GM12878 (cell line): ENCODE measurements at regions of chr1 and their contacts with region 1.

Region 1: GRCh38 chr1:201511941-201512539 is 5.1 kb upstream of the CSRP1 start:
- DNase-seq: peak; percentile 35
- ATAC-seq: peak; percentile 73
- H3K4me3 ChIP-seq: peak overlapping the region; percentile 43; the same call in 1 of the 2 replicates
- H3K27ac ChIP-seq: no peak overlapping the region; the same call in none of the 2 replicates
- H3K4me1 ChIP-seq: peaks cover 42% of the 10 kb centered on the region
- H3K27me3 ChIP-seq: no peaks in the 10 kb centered on the region
- CTCF ChIP-seq: peak in 1 of 3 experiments; percentile 3; a peak in 1 of 6 replicates
- EP300 ChIP-seq: no peak
- POLR2A ChIP-seq: no peak
- RAD21 ChIP-seq: no peak

Region 2: DNA sequence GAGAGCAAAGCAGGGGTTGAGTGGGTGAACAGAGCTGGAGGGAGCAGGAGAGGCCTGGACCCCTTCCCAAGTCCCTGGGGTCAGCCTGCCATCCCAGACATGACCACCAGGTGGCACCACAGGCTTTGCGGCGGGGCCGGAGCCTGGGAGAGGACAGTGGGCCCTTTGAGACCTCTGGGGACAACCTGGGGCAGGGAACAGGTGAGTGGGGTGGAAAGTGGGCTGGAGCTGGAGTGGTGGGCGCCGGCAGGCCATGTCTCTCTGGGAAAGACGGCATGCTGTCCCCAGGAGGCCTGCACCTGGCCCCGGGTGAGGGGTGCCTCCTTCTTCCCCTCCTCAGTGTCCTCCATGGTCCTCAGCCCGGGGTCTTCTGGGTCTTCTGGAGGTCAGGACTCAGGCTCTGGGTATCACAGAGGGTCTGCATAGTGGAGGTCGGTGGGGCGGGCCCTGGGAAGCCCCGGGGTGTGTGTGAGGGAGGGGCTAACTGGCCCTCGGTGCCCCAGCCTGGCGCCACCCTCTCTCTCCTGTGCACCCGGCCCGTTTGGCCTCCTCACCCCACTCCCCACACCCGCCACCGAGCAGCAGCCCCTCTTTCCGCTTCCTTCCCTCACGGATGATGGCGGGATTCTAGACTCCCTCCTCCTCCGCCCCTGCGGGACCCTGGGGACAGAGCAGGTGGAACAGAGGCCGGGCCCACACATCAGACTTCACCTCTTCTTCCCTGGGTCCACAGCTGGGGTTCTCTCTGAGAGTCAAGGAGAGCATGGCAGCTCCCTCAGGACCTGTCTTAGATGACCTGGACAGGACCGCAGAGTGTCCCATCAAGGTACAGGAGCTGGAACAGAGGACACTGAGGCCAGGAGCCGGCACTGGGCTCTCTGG is 257.2 kb before region 1 on chr1:
- CTCF ChIA-PET with region 1: interaction called, 6 read pairs
- POLR2A ChIA-PET with region 1: no interaction called
- RAD21 ChIA-PET with region 1: no interaction called
- SMC1A ChIA-PET with region 1: no interaction called
- in situ Hi-C with region 1: no loop called
- intact Hi-C with region 1: loop called (anchors 10 kb)
- DNase-seq: no peak
- ATAC-seq: peak; percentile 95
- H3K4me3 ChIP-seq: no peak overlapping the region
- H3K27ac ChIP-seq: no peak overlapping the region
- H3K4me1 ChIP-seq: no peaks in the 10 kb centered on the region
- H3K27me3 ChIP-seq: no peaks in the 10 kb centered on the region
- CTCF ChIP-seq: peak; percentile 94 to 99 (median 96)
- EP300 ChIP-seq: no peak
- POLR2A ChIP-seq: no peak
- RAD21 ChIP-seq: peak; percentile 89

Region 3: GRCh38 chr1:201385299-201385891 is 126.6 kb before region 1 on chr1:
- CTCF ChIA-PET with region 1: interaction called, 37 read pairs
- POLR2A ChIA-PET with region 1: no interaction called
- RAD21 ChIA-PET with region 1: interaction called, 10 read pairs
- SMC1A ChIA-PET with region 1: interaction called, 12 read pairs
- in situ Hi-C with region 1: no loop called
- intact Hi-C with region 1: no loop called
- DNase-seq: no peak
- ATAC-seq: peak; percentile 99
- H3K4me3 ChIP-seq: no peak overlapping the region
- H3K27ac ChIP-seq: no peak overlapping the region
- H3K4me1 ChIP-seq: no peaks in the 10 kb centered on the region
- H3K27me3 ChIP-seq: no peaks in the 10 kb centered on the region; a peak in 1 of 4 replicates
- CTCF ChIP-seq: peak; percentile 93 to 97 (median 96); a peak in 5 of 6 replicates
- EP300 ChIP-seq: no peak
- POLR2A ChIP-seq: no peak
- RAD21 ChIP-seq: peak; percentile 78

Region 4: DNA sequence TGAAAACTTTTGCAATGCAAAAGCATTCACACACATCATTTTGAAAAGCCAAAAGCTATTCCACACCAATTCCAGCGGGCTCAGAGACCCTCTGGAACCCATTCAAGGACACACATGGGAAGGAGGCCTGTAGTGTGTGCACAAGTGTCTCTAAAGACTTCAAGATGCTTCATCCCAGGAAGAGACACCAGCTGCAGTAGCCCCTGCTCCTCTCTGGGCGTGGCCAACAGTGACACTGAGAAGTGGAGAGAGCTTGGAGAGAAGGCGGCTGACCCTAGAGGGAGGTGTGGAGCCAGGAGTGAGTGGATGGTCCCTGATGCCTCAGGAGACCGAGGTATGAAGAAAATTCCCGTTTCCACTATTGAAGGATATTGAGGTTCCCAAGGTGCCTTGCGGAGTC is 75.6 kb before region 1 on chr1:
- CTCF ChIA-PET with region 1: interaction called, 88 read pairs
- POLR2A ChIA-PET with region 1: interaction called, 5 read pairs
- RAD21 ChIA-PET with region 1: interaction called, 35 read pairs
- SMC1A ChIA-PET with region 1: interaction called, 42 read pairs
- in situ Hi-C with region 1: no loop called
- intact Hi-C with region 1: no loop called
- DNase-seq: no peak
- ATAC-seq: peak; percentile 42; the same call in 2 of the 3 replicates
- H3K4me3 ChIP-seq: no peak overlapping the region
- H3K27ac ChIP-seq: no peak overlapping the region
- H3K4me1 ChIP-seq: peaks cover 3% of the 10 kb centered on the region; the same call in 1 of the 2 replicates
- H3K27me3 ChIP-seq: no peaks in the 10 kb centered on the region
- CTCF ChIP-seq: no peak; a peak in 1 of 6 replicates
- EP300 ChIP-seq: no peak
- POLR2A ChIP-seq: no peak
- RAD21 ChIP-seq: no peak

Region 5: GRCh38 chr1:201456499-201457309 is 55.3 kb before region 1 on chr1:
- CTCF ChIA-PET with region 1: interaction called, 309 read pairs
- POLR2A ChIA-PET with region 1: interaction called, 5 read pairs
- RAD21 ChIA-PET with region 1: interaction called, 24 read pairs
- SMC1A ChIA-PET with region 1: interaction called, 4 read pairs
- in situ Hi-C with region 1: no loop called
- intact Hi-C with region 1: no loop called
- DNase-seq: no peak
- ATAC-seq: peak; percentile 54
- H3K4me3 ChIP-seq: 0 out of 2 replicates have a peak overlapping the region, but pooled peaks have one; percentile 14
- H3K27ac ChIP-seq: no peak overlapping the region; the same call in 1 of the 2 replicates
- H3K4me1 ChIP-seq: peaks cover 31% of the 10 kb centered on the region
- H3K27me3 ChIP-seq: no peaks in the 10 kb centered on the region
- CTCF ChIP-seq: no peak
- EP300 ChIP-seq: no peak
- POLR2A ChIP-seq: no peak
- RAD21 ChIP-seq: no peak

Region 6: GRCh38 chr1:201495471-201496295 is 16.4 kb before region 1 on chr1:
- CTCF ChIA-PET with region 1: interaction called, 814 read pairs
- POLR2A ChIA-PET with region 1: no interaction called
- RAD21 ChIA-PET with region 1: interaction called, 6 read pairs
- SMC1A ChIA-PET with region 1: interaction called, 514 read pairs
- in situ Hi-C with region 1: no loop called
- intact Hi-C with region 1: no loop called
- DNase-seq: no peak
- ATAC-seq: no peak
- H3K4me3 ChIP-seq: no peak overlapping the region
- H3K27ac ChIP-seq: no peak overlapping the region
- H3K4me1 ChIP-seq: no peaks in the 10 kb centered on the region
- H3K27me3 ChIP-seq: no peaks in the 10 kb centered on the region
- CTCF ChIP-seq: no peak
- EP300 ChIP-seq: no peak
- POLR2A ChIP-seq: no peak
- RAD21 ChIP-seq: no peak

Region 7: DNA sequence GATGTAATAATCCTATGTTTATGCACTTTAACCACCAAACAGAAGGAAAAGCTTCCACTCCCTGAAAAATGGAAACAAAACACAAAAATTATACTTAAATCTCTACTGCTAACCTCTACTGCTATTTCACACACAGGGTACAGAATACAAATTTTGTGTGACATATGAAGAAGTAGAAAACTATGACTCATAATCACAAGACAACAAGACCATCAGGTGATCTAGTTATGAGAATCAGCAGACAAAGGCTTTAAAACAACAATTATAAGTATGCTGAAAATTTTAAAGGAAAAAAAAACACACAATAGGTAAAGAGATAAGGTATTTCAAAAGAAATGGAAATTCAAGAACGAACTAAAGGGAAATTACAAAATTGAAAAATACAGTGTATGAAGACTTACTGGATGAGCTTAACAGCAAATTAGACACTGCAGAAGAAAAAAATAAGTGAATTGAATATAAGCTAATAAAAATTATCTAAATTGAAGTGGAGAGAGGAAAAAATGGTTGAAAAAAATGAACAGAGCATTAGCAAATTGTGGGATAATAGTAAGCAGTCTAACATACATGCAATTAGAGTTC is 13.2 kb after region 1 on chr1:
- CTCF ChIA-PET with region 1: interaction called, 47 read pairs
- POLR2A ChIA-PET with region 1: no interaction called
- RAD21 ChIA-PET with region 1: interaction called, 3 read pairs
- SMC1A ChIA-PET with region 1: interaction called, 6 read pairs
- in situ Hi-C with region 1: no loop called
- intact Hi-C with region 1: no loop called
- DNase-seq: no peak
- ATAC-seq: no peak
- H3K4me3 ChIP-seq: no peak overlapping the region
- H3K27ac ChIP-seq: no peak overlapping the region
- H3K4me1 ChIP-seq: no peaks in the 10 kb centered on the region
- H3K27me3 ChIP-seq: no peaks in the 10 kb centered on the region
- CTCF ChIP-seq: no peak
- EP300 ChIP-seq: no peak
- POLR2A ChIP-seq: no peak
- RAD21 ChIP-seq: no peak

Region 8: DNA sequence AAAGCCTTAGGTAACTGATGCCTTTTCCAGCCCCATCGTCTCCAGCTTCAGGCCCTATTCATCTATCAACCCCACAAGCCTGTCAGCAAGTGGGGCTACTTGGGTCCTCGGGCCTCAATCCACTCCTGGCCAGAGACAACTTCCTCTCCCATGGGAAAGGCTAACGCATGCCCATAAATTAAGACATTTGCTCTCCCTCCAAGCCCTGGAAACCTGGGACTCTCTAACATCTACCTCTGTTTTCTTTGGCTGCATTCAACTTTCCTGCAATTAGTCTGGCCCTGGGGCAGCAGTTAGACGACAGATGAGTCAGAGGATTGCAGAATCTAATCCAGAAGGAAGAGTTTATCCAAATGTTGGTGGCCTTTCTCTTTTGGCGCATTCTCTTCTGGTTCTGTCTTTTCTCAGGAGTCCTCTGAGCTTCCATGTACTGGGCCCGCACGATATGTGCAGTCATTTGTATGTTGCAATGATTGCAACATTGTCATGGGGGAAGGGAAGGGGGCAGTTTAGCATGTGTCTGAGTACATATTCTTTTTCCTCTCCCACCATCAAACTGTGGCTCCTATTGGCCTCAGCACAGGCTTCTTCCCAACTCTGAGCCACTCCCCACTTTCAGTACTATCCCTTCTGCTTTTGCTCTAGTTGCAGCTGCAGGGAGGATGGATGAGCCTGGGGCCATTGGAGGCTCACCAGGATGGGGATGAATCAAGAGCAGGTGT is 81.3 kb after region 1 on chr1:
- CTCF ChIA-PET with region 1: no interaction called
- POLR2A ChIA-PET with region 1: no interaction called
- RAD21 ChIA-PET with region 1: no interaction called
- SMC1A ChIA-PET with region 1: no interaction called
- in situ Hi-C with region 1: no loop called
- intact Hi-C with region 1: no loop called
- DNase-seq: no peak
- ATAC-seq: no peak
- H3K4me3 ChIP-seq: no peak overlapping the region
- H3K27ac ChIP-seq: no peak overlapping the region
- H3K4me1 ChIP-seq: no peaks in the 10 kb centered on the region
- H3K27me3 ChIP-seq: peaks cover 0 to 8% of the 10 kb centered on the region in 2 experiments; a peak in 3 of 4 replicates
- CTCF ChIP-seq: no peak
- EP300 ChIP-seq: no peak
- POLR2A ChIP-seq: no peak
- RAD21 ChIP-seq: no peak

Region 9: DNA sequence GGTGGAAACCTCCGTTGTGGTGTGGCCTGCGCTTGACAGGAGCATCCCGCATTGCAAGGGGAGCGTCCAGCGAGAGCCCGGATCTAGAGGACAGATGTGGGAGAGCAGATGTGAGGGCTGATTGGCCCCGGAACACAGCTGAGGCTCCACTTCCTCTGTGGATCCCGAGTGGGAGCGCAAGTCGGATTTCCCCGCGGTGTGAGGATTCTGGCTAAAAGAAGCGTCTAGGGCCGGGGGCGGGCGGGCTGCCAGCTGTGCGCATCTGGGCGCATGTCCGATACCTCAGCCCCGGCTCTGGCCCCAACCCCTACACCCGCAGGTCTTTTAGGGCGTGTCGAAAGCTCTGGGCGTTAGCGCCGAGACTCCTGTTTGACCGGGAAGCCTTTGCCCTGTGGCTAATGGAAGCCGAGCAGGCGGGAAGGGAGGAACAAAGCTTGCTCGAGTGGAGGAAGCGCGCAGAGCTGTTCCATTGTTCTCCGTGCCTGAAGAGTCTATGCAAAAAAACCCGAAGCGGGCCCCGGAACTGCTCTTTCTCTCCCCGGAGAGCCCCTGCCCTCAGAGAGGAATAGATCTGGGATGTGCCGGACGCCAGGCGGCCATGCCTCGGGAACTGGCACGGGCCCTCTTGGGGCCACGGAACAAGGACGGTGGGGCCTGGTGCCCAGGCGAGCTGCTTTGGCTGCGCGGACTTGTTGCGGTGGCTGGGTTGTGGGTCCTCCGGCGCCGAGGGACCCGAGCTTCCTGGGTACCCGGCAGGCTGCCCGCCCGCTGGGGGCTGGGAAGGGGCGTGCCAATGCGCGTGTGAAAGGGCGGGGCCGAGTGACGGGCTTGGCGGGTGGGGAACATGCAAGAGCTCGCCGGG is 138.0 kb after region 1 on chr1:
- CTCF ChIA-PET with region 1: no interaction called
- POLR2A ChIA-PET with region 1: no interaction called
- RAD21 ChIA-PET with region 1: no interaction called
- SMC1A ChIA-PET with region 1: no interaction called
- in situ Hi-C with region 1: no loop called
- intact Hi-C with region 1: no loop called
- DNase-seq: no peak
- ATAC-seq: peak; percentile 52
- H3K4me3 ChIP-seq: no peak overlapping the region
- H3K27ac ChIP-seq: no peak overlapping the region
- H3K4me1 ChIP-seq: no peaks in the 10 kb centered on the region
- H3K27me3 ChIP-seq: peaks cover 4 to 15% of the 10 kb centered on the region in 2 experiments; a peak in 3 of 4 replicates
- CTCF ChIP-seq: no peak
- EP300 ChIP-seq: no peak
- POLR2A ChIP-seq: no peak
- RAD21 ChIP-seq: no peak